CD14-positive monocyte (primary cell): ENCODE measurements at regions of chr12 and their contacts with region 1.

Region 1: GRCh38 chr12:2057041-2057794 is 4.4 kb downstream of the CACNA1C start:
- DNase-seq: peak; percentile 11 to 34 (median 15)
- H3K4me3 ChIP-seq: no peak overlapping the region
- H3K4me3 Mint-ChIP-seq: no peak overlapping the region
- H3K27ac ChIP-seq: no peak overlapping the region
- H3K27ac Mint-ChIP-seq: no peak overlapping the region
- H3K4me1 ChIP-seq: peaks cover 3 to 10% of the 10 kb centered on the region in 2 donors
- H3K4me1 Mint-ChIP-seq: peaks cover 7% of the 10 kb centered on the region
- H3K27me3 ChIP-seq: peaks cover 34 to 37% of the 10 kb centered on the region in 2 donors
- H3K27me3 Mint-ChIP-seq: peaks cover 37 to 49% (median 45%) of the 10 kb centered on the region in 3 donors
- CTCF ChIP-seq: peak; percentile 75

Region 2: GRCh38 chr12:2583091-2583497 is 525.9 kb after region 1 on chr12:
- intact Hi-C with region 1: loop called (anchors 2 to 5 kb)
- DNase-seq: peak; percentile 41 to 63 (median 61)
- H3K4me3 ChIP-seq: no peak overlapping the region
- H3K4me3 Mint-ChIP-seq: peak overlapping the region in 1 of 2 donors; percentile 53
- H3K27ac ChIP-seq: no peak overlapping the region
- H3K27ac Mint-ChIP-seq: no peak overlapping the region
- H3K4me1 ChIP-seq: peaks cover 4 to 8% of the 10 kb centered on the region in 2 donors
- H3K4me1 Mint-ChIP-seq: peaks cover 4% of the 10 kb centered on the region
- H3K27me3 ChIP-seq: peaks cover 2 to 21% of the 10 kb centered on the region in 2 donors
- H3K27me3 Mint-ChIP-seq: peaks cover 11 to 31% (median 23%) of the 10 kb centered on the region in 3 donors
- CTCF ChIP-seq: peak; percentile 94